ENCODE measurements at regions of chr3 and their contacts with region 1.

Region 1: DNA sequence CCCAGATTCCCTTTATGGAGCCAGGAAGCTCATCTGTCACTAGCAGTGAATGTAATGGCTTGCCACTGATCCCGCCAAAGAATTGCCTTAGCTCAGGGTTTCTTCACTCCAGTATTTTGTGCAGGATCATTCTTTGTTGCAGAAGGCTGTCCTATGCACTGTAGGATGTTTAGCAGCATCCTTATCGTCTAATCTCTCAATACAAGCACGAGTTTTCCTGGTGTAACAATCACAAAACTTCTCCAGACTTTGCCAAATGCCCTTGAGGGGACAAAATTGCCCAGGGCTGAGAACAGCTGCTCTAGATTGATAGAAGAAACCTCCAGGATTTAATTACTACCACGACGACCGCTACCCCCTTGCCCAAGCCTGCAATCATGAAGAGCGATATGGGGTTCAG is 6.8 kb upstream of the SHQ1 start:
- DNase-seq: no peak
- H3K4me3 ChIP-seq: no peak overlapping the region
- H3K27ac ChIP-seq: no peak overlapping the region
- H3K4me1 ChIP-seq: no peaks in the 10 kb centered on the region
- H3K27me3 ChIP-seq: peaks cover 2 to 5% of the 10 kb centered on the region in 2 experiments
- CTCF ChIP-seq: no peak
- POLR2A ChIP-seq: no peak

Region 2: DNA sequence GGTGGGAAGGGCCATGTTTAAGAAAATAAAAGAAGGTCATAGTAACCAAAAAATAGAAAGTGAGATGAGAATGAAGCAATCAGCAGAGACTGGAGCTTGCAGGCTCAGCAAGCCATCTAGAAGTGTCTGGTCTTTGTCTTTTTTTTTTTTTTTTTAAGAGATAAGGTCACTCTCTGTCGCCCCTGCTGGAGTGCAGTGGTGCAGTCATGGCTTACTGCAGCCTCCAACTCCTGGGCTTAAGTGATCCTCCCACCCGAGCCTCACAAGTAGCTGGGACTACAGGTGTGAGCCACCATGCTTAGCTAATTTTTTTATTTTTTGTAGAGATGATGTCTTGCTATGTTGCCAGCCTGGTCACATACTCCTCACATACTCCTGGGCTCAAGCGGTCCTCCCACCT is 69.1 kb after region 1 on chr3:
- CTCF ChIA-PET with region 1: interaction called, 7 read pairs
- POLR2A ChIA-PET with region 1: no interaction called
- dilution Hi-C with region 1: no loop called
- intact Hi-C with region 1: loop called (anchors 2 kb)
- DNase-seq: no peak
- H3K4me3 ChIP-seq: no peak overlapping the region
- H3K27ac ChIP-seq: no peak overlapping the region
- H3K4me1 ChIP-seq: no peaks in the 10 kb centered on the region
- H3K27me3 ChIP-seq: peaks cover 2 to 5% of the 10 kb centered on the region in 2 experiments
- CTCF ChIP-seq: peak in 1 of 2 donors; percentile 1
- POLR2A ChIP-seq: no peak